ENCODE measurements at regions of chr5 and their contacts with region 1.

Region 1: DNA sequence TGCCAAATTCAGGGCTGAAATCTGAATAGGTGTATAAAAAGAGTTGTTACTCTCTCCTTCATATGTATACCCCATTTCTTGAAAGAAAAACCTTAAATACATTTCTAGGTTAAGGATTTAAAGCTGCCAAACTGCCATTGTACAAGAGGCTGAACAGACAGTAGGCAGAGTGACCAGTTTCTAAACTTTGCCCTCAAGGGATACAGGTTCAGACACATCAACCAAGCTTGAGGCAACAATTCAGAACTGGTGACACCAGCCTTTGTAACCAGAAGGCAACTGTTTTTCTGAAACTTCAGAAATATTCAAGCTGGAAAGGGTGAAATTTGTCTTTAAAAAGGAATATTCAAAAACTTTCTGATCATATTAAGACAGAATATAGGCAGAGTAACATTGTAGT is 47.5 kb downstream of the FAM114A2 start:
- DNase-seq: no peak
- ATAC-seq: no peak
- H3K4me3 ChIP-seq: no peak overlapping the region
- H3K4me3 Mint-ChIP-seq: no peak overlapping the region
- H3K27ac ChIP-seq: no peak overlapping the region
- H3K27ac Mint-ChIP-seq: no peak overlapping the region
- H3K4me1 ChIP-seq: no peaks in the 10 kb centered on the region
- H3K4me1 Mint-ChIP-seq: no peaks in the 10 kb centered on the region
- H3K27me3 ChIP-seq: no peaks in the 10 kb centered on the region
- H3K27me3 Mint-ChIP-seq: no peaks in the 10 kb centered on the region
- CTCF ChIP-seq: no peak

Region 2: DNA sequence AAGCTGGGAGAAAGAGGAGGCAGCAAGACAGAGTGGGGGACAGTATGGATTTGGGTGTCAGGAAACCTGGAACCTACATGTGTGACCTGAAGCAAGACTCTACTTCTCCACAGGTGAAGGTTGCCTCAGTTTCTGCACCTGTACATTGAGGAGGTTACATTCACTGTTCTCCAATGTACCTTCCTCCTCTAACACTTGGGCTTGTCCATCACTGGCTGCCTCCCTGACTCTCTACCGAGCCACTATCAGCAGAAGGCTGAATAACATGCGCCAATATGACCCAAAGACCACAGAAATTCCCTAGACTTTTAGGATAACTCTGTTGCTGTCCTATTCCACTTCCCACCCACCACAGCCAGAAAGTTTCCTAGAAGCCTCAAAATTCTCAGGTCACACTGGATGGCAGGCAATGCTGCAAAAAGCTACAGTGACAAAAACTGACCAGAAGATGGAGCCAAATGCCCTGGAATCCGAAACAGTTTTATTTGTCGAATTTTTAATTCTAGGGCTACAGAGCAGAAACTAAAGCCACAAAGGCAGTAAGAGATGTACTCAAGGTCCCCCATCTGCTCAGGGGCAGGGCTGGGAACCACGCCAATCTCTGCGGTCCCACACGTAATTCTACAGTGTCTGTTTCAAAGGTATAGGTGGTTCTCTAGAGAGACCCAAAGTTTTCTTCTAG is 16.9 kb before region 1 on chr5:
- CTCF ChIA-PET with region 1: interaction called, 13 read pairs
- POLR2A ChIA-PET with region 1: no interaction called
- intact Hi-C with region 1: no loop called
- DNase-seq: peak in 5 of 9 experiments; percentile 17 to 60 (median 19)
- ATAC-seq: peak; percentile 38
- H3K4me3 ChIP-seq: no peak overlapping the region
- H3K4me3 Mint-ChIP-seq: no peak overlapping the region
- H3K27ac ChIP-seq: no peak overlapping the region
- H3K27ac Mint-ChIP-seq: no peak overlapping the region
- H3K4me1 ChIP-seq: no peaks in the 10 kb centered on the region
- H3K4me1 Mint-ChIP-seq: no peaks in the 10 kb centered on the region
- H3K27me3 ChIP-seq: no peaks in the 10 kb centered on the region
- H3K27me3 Mint-ChIP-seq: peaks cover 13% of the 10 kb centered on the region
- CTCF ChIP-seq: peak; percentile 63

Measured in CD8-positive, alpha-beta T cell (primary cell).